Common myeloid progenitor, CD34-positive (primary cell): ENCODE measurements at regions of chr16 and their contacts with region 1.

Region 1: DNA sequence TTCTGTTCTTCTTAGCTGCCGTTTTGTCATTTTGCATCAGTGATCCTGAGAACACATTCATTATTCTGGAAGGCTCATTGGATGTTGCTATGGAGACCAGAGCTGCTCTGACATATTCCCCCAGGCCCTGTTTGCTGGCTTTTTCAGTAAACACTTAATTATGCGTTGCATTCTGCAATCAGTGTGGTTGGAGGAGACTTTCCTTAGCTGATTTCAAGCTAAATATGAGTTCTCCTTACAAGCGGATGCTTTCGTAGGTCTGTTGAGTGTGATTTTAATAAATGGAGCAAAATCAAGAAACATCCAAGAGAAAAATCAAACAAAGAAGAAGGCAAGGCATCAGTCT is 38.2 kb upstream of the NUDT7 start:
- DNase-seq: no peak
- H3K4me3 ChIP-seq: no peak overlapping the region
- H3K27ac ChIP-seq: no peak overlapping the region
- H3K4me1 ChIP-seq: peaks cover 0 to 13% (median 4%) of the 10 kb centered on the region in 4 experiments
- H3K27me3 ChIP-seq: peaks cover 0 to 2% (median 0%) of the 10 kb centered on the region in 5 experiments

Region 2: GRCh38 chr16:77637940-77638339 is 46.2 kb before region 1 on chr16:
- CTCF ChIA-PET with region 1: no interaction called
- POLR2A ChIA-PET with region 1: no interaction called
- DNase-seq: no peak
- H3K4me3 ChIP-seq: no peak overlapping the region
- H3K27ac ChIP-seq: no peak overlapping the region
- H3K4me1 ChIP-seq: no peaks in the 10 kb centered on the region
- H3K27me3 ChIP-seq: peaks cover 0 to 14% (median 3%) of the 10 kb centered on the region in 5 experiments

Region 3: GRCh38 chr16:77971306-77972271 is 287.4 kb after region 1 on chr16:
- CTCF ChIA-PET with region 1: interaction called, 95 read pairs
- POLR2A ChIA-PET with region 1: no interaction called
- DNase-seq: peak; percentile 69 to 81 (median 72)
- H3K4me3 ChIP-seq: no peak overlapping the region
- H3K27ac ChIP-seq: no peak overlapping the region
- H3K4me1 ChIP-seq: peaks cover 0 to 4% (median 0%) of the 10 kb centered on the region in 4 experiments
- H3K27me3 ChIP-seq: peaks cover 0 to 17% (median 8%) of the 10 kb centered on the region in 5 experiments